ENCODE measurements at regions of chr16 and their contacts with region 1.

Region 1: DNA sequence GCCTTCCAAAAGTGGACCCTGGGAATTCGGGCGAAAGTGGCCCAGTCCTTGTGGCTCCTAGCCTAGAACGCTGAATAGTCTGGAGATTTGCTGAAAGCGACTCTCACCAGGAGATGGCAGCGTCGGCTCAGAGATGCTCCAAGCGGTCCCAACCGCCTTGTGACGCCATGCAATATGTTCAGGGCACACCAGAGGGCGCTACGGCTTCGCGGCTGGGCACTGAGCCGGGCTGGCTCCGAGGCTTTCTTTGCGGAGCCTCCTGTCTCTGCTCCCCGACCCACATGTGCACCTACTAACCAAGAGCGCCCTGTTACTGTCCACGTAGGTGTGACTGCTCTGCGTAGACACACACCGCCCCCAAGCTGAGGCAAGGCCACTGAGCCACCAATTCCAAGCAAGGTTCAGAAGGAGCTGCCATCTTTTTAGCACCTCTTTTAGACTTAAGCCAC is 36.9 kb downstream of the SYCE1L start:
- DNase-seq: no peak
- H3K4me3 ChIP-seq: no peak overlapping the region
- H3K27ac ChIP-seq: no peak overlapping the region
- H3K4me1 ChIP-seq: no peaks in the 10 kb centered on the region
- H3K27me3 ChIP-seq: no peaks in the 10 kb centered on the region
- CTCF ChIP-seq: peak; percentile 99 to 100 (median 99)

Region 2: GRCh38 chr16:77195411-77195810 is 40.7 kb before region 1 on chr16:
- dilution Hi-C with region 1: no loop called
- DNase-seq: no peak
- H3K4me3 ChIP-seq: no peak overlapping the region
- H3K27ac ChIP-seq: no peak overlapping the region
- H3K4me1 ChIP-seq: peaks cover 7% of the 10 kb centered on the region
- H3K27me3 ChIP-seq: no peaks in the 10 kb centered on the region
- CTCF ChIP-seq: no peak

Region 3: DNA sequence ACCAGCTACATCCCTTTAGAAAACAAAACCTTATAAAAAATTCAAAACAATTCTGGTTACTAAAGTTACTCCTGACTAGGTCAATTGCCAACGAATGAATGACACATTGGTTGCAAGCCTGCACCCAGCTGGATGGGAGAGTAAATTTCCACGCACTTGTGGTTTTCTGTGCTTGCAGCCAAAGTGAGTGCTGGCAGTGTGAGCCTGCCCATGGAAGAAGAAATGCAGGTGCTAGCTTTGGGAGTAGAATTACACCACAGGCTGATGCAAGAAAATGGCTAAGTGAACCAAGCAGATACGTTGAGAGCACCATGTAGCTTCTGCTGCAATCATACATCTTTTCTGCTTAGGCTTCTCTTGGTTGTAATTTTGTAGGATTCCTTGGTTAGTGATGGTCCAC is 37.7 kb after region 1 on chr16:
- dilution Hi-C with region 1: no loop called
- DNase-seq: no peak
- H3K4me3 ChIP-seq: no peak overlapping the region
- H3K27ac ChIP-seq: no peak overlapping the region
- H3K4me1 ChIP-seq: no peaks in the 10 kb centered on the region
- H3K27me3 ChIP-seq: no peaks in the 10 kb centered on the region
- CTCF ChIP-seq: no peak

Region 4: GRCh38 chr16:77584205-77584859 is 348.2 kb after region 1 on chr16:
- dilution Hi-C with region 1: loop called (anchors 25 kb)
- DNase-seq: no peak
- H3K4me3 ChIP-seq: no peak overlapping the region
- H3K27ac ChIP-seq: no peak overlapping the region
- H3K4me1 ChIP-seq: peaks cover 3% of the 10 kb centered on the region
- H3K27me3 ChIP-seq: no peaks in the 10 kb centered on the region
- CTCF ChIP-seq: peak; percentile 61 to 72 (median 71)